Psoas muscle (tissue), 8 donors: ENCODE measurements at regions of chr15 and their contacts with region 1.

Region 1: DNA sequence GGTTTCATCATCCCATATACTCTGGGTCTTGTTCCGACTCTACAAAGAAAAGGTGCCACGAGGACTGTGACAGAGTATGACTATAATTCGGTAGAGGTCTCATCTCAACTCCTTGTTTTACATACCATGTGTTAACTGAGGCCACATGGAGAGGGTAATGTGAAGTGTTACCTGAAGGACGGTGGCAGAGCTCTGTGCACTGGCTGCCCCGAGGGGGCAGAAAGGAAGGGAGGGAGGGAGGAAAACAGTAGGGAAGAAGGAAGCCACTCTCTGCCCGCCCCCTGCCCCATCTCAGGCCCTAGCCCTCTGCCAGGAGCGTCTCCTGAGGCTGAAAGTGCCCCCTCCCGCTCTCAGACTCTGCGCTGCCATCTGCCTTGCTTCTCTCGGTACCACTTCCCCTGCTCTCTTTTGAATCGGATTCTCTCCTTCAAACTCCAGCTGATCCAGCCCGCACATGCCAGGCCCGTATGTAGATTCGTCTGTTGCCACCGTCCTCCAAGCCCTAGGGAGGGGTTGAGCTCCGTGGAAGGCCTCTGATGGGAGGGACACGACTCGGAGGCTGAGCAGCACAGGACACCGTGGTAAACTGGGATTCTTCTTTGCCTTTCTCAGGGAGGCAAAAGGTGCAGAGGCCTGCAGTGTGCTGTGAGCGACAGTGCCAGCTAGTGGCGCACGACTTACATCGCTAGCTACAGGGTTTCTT is 70.5 kb upstream of the ATP10A start:
- DNase-seq: peak; percentile 68 to 80
- ATAC-seq: peak; percentile 79 to 94 (median 86)
- H3K4me3 ChIP-seq: peak overlapping the region; percentile 21
- H3K27ac ChIP-seq: no peak overlapping the region
- H3K4me1 ChIP-seq: no peaks in the 10 kb centered on the region
- H3K27me3 ChIP-seq: no peaks in the 10 kb centered on the region
- CTCF ChIP-seq: peak; percentile 64

Region 2: DNA sequence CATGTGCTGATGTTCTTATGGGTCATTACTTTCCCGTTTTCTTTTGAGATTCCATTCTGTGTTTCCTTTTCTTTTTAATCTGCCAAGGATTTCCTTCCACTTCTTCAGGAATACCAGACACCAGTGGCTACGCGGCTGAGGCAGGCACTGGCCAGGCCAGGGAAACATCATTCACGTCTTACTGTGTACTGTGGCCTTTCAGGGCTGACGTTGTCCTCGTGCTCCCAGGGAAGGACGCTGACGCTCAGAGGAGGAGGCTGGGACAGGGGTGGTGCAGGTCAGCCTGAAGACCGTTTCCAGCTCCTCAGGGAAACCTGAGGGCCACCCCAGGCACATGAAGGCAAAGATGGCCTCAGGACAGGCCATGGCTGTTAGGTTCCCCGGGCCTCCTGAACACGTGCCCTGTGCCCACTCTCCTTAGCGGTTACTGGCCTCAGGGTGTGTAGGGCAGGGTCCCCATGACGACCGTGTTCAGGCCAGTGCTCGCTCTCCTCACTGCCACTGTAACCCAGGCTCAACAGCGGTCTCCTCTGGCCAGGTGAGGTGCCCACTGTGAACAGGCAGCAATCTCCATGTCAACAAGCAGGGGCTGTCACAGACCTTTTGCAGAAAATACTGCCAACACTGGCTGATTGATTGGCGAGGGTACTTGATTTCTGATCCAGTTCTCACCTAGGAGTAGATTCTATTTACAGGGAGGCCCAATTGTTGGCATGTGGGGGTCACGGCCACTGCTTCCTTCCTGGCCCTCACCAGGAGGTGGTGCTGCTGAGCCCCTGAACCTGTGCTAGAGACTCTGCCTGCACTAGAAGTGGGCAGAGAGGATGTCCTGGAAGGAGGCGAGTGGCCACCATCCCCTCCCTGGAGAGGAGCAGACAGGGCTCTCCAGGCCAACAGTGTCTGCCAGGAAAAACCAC is 240.0 kb before region 1 on chr15:
- intact Hi-C with region 1: loop called (anchors 5 to 10 kb)
- DNase-seq: peak in 1 of 2 donors; percentile 73
- ATAC-seq: peak; percentile 62 to 79 (median 79)
- H3K4me3 ChIP-seq: no peak overlapping the region
- H3K27ac ChIP-seq: no peak overlapping the region
- H3K4me1 ChIP-seq: no peaks in the 10 kb centered on the region
- H3K27me3 ChIP-seq: no peaks in the 10 kb centered on the region
- CTCF ChIP-seq: peak; percentile 55